Kidney (tissue), 22 donors: ENCODE measurements at regions of chr18 and their contacts with region 1.

Region 1: DNA sequence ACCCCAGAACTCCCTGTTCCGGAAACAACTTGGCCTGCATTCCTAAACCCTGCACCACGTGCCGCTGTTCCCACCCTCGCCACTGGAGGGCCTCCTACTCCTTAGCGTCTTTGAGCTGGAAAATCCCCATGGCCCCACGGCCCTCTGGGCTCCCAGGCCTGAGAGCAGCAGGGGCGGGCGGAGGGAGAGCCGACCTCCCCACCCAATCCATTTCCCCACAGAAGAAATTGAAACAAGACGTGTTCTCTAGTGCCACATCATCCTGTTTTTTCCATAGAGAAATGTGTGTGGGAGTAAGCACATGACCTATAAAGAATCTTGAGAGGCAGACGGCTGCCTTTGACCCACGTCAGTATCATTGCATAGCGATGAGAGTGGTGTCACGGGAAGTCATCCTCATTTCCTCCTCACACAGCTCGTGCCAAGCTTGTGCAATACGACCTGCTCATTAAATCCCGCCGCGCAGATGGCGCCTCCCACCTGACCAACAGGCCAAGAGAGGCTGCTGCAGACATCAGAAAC is 79.2 kb downstream of the LAMA1 start:
- DNase-seq: peak; percentile 85 to 93 (median 92)
- H3K4me3 ChIP-seq: peak overlapping the region in 2 of 3 donors; percentile 31 to 43
- H3K27ac ChIP-seq: peak overlapping the region in 1 of 2 donors; percentile 61
- H3K4me1 ChIP-seq: peaks cover 0 to 4% (median 0%) of the 10 kb centered on the region in 3 donors
- H3K27me3 ChIP-seq: no peaks in the 10 kb centered on the region
- CTCF ChIP-seq: peak; percentile 64

Region 2: GRCh38 chr18:6842081-6842480 is 196.3 kb before region 1 on chr18:
- intact Hi-C with region 1: no loop called
- DNase-seq: no peak
- H3K4me3 ChIP-seq: no peak overlapping the region
- H3K27ac ChIP-seq: no peak overlapping the region
- H3K4me1 ChIP-seq: no peaks in the 10 kb centered on the region
- H3K27me3 ChIP-seq: no peaks in the 10 kb centered on the region
- CTCF ChIP-seq: no peak

Region 3: GRCh38 chr18:7177116-7177744 is 138.8 kb after region 1 on chr18:
- intact Hi-C with region 1: loop called (anchors 10 kb)
- DNase-seq: peak in 4 of 5 donors; percentile 61 to 83 (median 72)
- H3K4me3 ChIP-seq: no peak overlapping the region
- H3K27ac ChIP-seq: no peak overlapping the region
- H3K4me1 ChIP-seq: no peaks in the 10 kb centered on the region
- H3K27me3 ChIP-seq: no peaks in the 10 kb centered on the region
- CTCF ChIP-seq: peak; percentile 75